B cell (primary cell): ENCODE measurements at regions of chr14 and their contacts with region 1.

Region 1: DNA sequence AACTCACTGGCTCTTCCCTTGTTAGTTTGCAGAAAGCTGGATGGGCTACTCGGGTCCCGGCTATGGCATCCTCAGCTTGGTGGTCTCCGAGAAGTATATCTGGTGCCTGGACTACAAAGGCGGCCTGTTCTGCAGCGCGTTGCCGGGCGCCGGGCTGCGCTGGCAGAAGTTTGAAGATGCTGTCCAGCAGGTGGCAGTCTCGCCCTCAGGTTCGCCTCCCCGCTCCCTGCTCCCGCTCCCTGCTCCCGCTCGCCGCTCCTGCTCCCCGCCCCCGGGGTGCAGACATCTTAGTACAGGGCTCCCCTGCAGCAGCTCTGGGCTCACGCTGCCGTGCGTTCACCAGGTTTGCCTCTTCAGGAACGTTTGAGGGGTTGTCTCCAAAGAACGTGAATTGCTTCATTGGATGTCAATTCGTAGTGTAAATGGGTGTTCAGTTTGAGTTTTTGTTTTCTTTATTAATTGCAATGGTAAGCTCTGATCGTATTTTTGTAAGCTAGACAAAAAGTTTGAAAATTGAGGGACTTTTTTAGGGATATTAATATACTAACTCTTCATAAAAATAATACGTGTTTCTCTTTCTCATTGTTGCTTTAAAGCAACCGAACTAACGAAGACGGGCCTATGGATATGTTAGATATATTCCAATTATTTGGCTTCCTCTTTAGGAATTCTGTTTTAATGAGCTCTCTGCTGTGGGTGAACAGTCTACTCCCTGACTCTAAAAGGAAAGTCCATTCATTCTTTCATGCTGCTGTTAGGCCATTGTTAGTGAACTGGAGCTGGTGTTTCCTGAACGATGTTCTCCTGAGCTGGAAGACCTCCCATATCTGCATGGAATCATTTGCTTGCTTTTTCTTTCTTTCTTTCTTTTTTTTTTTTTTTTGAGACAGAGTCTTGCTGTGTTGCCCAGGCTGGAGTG is 71.3 kb downstream of the ANKRD9 start:
- DNase-seq: peak; percentile 80
- ATAC-seq: peak; percentile 58
- H3K4me3 ChIP-seq: no peak overlapping the region
- H3K4me3 Mint-ChIP-seq: peak overlapping the region; percentile 13
- H3K27ac ChIP-seq: no peak overlapping the region
- H3K27ac Mint-ChIP-seq: no peak overlapping the region
- H3K4me1 ChIP-seq: peaks cover 4 to 6% of the 10 kb centered on the region in 2 donors
- H3K4me1 Mint-ChIP-seq: peaks cover 3% of the 10 kb centered on the region
- H3K27me3 ChIP-seq: no peaks in the 10 kb centered on the region
- H3K27me3 Mint-ChIP-seq: no peaks in the 10 kb centered on the region
- CTCF ChIP-seq: peak; percentile 81

Region 2: GRCh38 chr14:102008891-102009290 is 429.4 kb before region 1 on chr14:
- CTCF ChIA-PET with region 1: no interaction called
- POLR2A ChIA-PET with region 1: no interaction called
- intact Hi-C with region 1: no loop called
- DNase-seq: no peak
- ATAC-seq: no peak
- H3K4me3 ChIP-seq: no peak overlapping the region
- H3K4me3 Mint-ChIP-seq: no peak overlapping the region
- H3K27ac ChIP-seq: no peak overlapping the region
- H3K27ac Mint-ChIP-seq: no peak overlapping the region
- H3K4me1 ChIP-seq: no peaks in the 10 kb centered on the region
- H3K4me1 Mint-ChIP-seq: no peaks in the 10 kb centered on the region
- H3K27me3 ChIP-seq: no peaks in the 10 kb centered on the region
- H3K27me3 Mint-ChIP-seq: no peaks in the 10 kb centered on the region
- CTCF ChIP-seq: no peak

Region 3: GRCh38 chr14:102451061-102451350 is 12.8 kb after region 1 on chr14:
- CTCF ChIA-PET with region 1: interaction called, 23 read pairs
- POLR2A ChIA-PET with region 1: no interaction called
- intact Hi-C with region 1: no loop called
- DNase-seq: no peak
- ATAC-seq: no peak
- H3K4me3 ChIP-seq: no peak overlapping the region
- H3K4me3 Mint-ChIP-seq: no peak overlapping the region
- H3K27ac ChIP-seq: no peak overlapping the region
- H3K27ac Mint-ChIP-seq: no peak overlapping the region
- H3K4me1 ChIP-seq: no peaks in the 10 kb centered on the region
- H3K4me1 Mint-ChIP-seq: no peaks in the 10 kb centered on the region
- H3K27me3 ChIP-seq: no peaks in the 10 kb centered on the region
- H3K27me3 Mint-ChIP-seq: no peaks in the 10 kb centered on the region
- CTCF ChIP-seq: no peak

Region 4: DNA sequence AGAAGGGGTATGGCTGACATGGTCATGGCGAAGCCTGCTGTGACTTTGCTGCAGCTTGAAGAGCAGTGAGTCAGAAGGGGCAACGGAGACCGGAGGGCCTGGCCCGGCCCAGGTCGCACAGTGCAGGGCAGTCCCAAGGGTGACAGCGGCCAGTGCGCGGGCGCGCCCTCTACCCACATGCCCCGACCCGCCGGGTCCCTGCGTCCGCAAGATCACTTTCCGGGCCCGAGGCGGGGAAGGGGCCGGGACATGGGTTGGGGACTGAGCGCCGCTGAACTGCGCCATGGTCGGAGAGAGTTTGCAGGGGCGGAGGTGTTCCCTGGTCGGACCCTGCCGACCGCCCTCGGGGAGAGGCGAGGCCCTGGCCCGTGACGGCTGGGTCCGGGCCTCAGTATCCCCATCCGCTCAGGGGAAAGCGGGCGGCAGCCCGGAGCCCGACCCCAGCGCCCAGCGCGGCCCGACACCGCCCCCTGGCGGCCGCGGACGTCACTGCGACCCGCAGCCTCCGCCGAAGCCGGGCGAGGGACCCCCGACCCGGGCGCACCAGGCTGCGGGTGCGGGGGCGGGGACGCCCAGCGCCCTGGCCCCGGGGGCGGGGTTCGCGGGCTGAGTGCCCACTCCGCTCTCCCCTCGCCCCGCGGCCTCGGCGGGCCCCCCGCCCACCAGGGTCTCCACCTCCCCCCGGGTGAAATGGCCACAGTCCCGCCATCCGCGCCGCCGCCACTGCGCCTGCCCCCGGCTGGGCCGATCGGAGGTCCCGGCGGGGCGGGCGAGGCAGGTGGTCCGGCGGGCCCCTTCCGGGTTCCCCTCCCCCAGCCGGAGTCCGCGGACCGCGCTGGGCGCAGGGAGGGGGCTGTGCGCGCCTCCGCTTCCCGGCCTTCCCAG is 78.5 kb after region 1 on chr14:
- CTCF ChIA-PET with region 1: interaction called, 118 read pairs
- POLR2A ChIA-PET with region 1: no interaction called
- intact Hi-C with region 1: no loop called
- DNase-seq: peak; percentile 74
- ATAC-seq: peak; percentile 89
- H3K4me3 ChIP-seq: peak overlapping the region in 4 of 5 experiments; percentile 33 to 64 (median 54)
- H3K4me3 Mint-ChIP-seq: peak overlapping the region; percentile 88
- H3K27ac ChIP-seq: no peak overlapping the region
- H3K27ac Mint-ChIP-seq: peak overlapping the region; percentile 68
- H3K4me1 ChIP-seq: peaks cover 10 to 12% of the 10 kb centered on the region in 2 donors
- H3K4me1 Mint-ChIP-seq: peaks cover 7% of the 10 kb centered on the region
- H3K27me3 ChIP-seq: peaks cover 0 to 30% (median 3%) of the 10 kb centered on the region in 4 experiments
- H3K27me3 Mint-ChIP-seq: peaks cover 15% of the 10 kb centered on the region
- CTCF ChIP-seq: peak; percentile 96